ENCODE measurements at regions of chr2 and their contacts with region 1.

Region 1: DNA sequence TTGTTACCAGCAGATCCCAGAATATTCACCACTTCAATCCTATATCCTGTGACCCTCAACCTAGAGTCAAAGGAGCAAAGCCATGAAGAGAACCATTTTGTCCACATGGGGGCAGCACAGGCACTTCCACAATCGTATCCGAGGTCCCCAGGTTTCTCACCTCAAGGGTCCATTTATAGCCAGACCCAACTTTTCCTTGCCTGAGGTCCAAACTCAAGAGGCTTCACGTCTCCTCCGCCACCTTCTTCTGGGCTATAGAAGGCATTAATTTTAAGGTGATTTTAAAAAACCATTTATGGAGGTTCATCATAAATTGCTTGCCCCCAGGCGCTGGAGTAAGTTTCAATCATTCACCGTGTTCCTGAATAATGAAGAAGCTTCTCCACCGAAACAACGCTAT is 111.6 kb upstream of the NABP1 start:
- DNase-seq: peak; percentile 59 to 86 (median 65)
- ATAC-seq: peak; percentile 91
- H3K4me3 ChIP-seq: no peak overlapping the region
- H3K27ac ChIP-seq: peak overlapping the region; percentile 71; the same call in 2 of the 3 replicates
- H3K4me1 ChIP-seq: peaks cover 0 to 36% of the 10 kb centered on the region in 2 experiments; a peak in 3 of 5 replicates
- H3K27me3 ChIP-seq: no peaks in the 10 kb centered on the region
- CTCF ChIP-seq: peak; percentile 73 to 77 (median 75)
- EP300 ChIP-seq: no peak
- POLR2A ChIP-seq: no peak
- RAD21 ChIP-seq: peak; percentile 71 to 75

Region 2: GRCh38 chr2:191555092-191555742 is 11.1 kb before region 1 on chr2:
- CTCF ChIA-PET with region 1: no interaction called
- POLR2A ChIA-PET with region 1: no interaction called
- in situ Hi-C with region 1: no loop called
- intact Hi-C with region 1: no loop called
- DNase-seq: peak; percentile 63 to 87 (median 73)
- ATAC-seq: peak; percentile 90
- H3K4me3 ChIP-seq: no peak overlapping the region
- H3K27ac ChIP-seq: no peak overlapping the region
- H3K4me1 ChIP-seq: peaks cover 4 to 15% of the 10 kb centered on the region in 2 experiments; a peak in 3 of 5 replicates
- H3K27me3 ChIP-seq: no peaks in the 10 kb centered on the region
- CTCF ChIP-seq: peak; percentile 66 to 76 (median 72)
- EP300 ChIP-seq: no peak
- POLR2A ChIP-seq: no peak
- RAD21 ChIP-seq: peak; percentile 83 to 84

Region 3: DNA sequence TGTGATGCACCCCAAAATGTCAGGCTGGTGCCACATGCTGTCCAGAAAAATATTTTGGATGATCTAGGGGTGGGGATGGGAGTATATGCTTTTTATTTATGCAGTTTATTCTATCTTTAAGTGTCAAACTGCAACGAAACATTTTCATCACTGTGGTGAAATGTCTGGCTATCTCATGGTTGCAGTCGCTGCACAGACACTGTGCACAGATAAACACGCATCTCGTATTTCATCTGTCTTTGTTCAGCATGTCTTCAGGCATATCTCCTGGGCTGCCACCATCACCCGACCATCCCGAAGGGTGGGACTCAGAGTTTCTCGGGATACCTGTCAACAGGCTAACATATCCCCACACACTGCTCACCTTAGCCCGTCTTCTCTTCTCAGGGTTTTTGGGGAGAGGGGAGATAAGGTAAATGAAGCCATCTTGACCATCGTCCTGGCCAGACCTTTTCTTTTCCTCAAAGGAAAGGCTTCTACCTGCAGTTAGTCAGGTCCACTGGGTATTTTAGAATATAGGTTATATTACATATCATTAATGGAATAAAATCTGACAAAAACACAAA is 30.9 kb after region 1 on chr2:
- CTCF ChIA-PET with region 1: no interaction called
- POLR2A ChIA-PET with region 1: no interaction called
- in situ Hi-C with region 1: no loop called
- intact Hi-C with region 1: loop called (anchors 2 kb)
- DNase-seq: peak; percentile 36 to 85 (median 54)
- ATAC-seq: peak; percentile 91
- H3K4me3 ChIP-seq: no peak overlapping the region
- H3K27ac ChIP-seq: peak overlapping the region; percentile 48; the same call in 2 of the 3 replicates
- H3K4me1 ChIP-seq: peaks cover 0 to 14% of the 10 kb centered on the region in 2 experiments; a peak in 3 of 5 replicates
- H3K27me3 ChIP-seq: no peaks in the 10 kb centered on the region
- CTCF ChIP-seq: no peak
- EP300 ChIP-seq: peak; percentile 98
- POLR2A ChIP-seq: no peak
- RAD21 ChIP-seq: no peak; a peak in 1 of 4 replicates

Region 4: GRCh38 chr2:191637182-191638078 is 71.1 kb after region 1 on chr2:
- CTCF ChIA-PET with region 1: no interaction called
- POLR2A ChIA-PET with region 1: no interaction called
- in situ Hi-C with region 1: loop called (anchors 5 kb)
- intact Hi-C with region 1: loop called (anchors 1 kb)
- DNase-seq: peak; percentile 25 to 72 (median 40)
- ATAC-seq: peak; percentile 81
- H3K4me3 ChIP-seq: peak overlapping the region; percentile 22
- H3K27ac ChIP-seq: peak overlapping the region; percentile 85
- H3K4me1 ChIP-seq: peaks cover 0 to 30% of the 10 kb centered on the region in 2 experiments; a peak in 4 of 5 replicates
- H3K27me3 ChIP-seq: no peaks in the 10 kb centered on the region
- CTCF ChIP-seq: no peak
- EP300 ChIP-seq: peak; percentile 88
- POLR2A ChIP-seq: no peak
- RAD21 ChIP-seq: peak in 1 of 2 experiments; percentile 21; a peak in 1 of 4 replicates

Region 5: DNA sequence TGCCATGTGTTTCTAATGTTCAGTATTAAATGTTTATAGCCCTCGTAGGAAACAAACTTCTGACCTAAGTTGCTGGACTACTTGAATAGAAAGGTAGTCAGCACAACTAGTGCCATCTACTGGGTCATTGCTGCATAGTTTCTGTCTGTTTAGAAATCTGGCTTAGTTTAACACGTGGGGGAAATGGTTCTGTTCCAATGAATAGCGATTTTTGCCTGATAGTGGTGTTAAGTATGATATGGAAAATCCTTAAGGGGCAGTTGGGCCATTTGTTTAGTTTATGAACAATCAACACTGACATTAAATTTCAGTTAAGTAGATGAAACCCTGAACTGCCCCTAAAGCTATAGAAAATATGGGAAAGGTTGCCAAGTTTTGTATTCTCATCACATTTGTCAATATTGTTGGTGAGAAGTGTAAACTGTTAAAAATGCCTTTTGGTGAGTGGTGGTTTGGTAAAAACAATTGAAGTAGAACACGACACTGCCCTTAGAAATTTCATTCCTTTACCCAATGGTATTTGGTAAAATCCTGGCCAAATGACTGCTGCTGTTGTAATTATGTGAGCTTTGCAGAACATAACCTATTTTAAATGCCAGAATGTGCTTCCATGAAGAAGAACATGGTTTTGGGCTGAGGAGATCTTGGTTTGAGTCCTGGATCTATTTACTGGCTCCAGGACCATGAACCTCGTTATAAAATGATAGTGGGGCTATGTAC is 124.8 kb after region 1 on chr2:
- CTCF ChIA-PET with region 1: interaction called, 11 read pairs
- POLR2A ChIA-PET with region 1: interaction called, 5 read pairs
- in situ Hi-C with region 1: no loop called
- intact Hi-C with region 1: loop called (anchors 1 kb)
- DNase-seq: peak; percentile 47 to 75 (median 54)
- ATAC-seq: peak; percentile 73
- H3K4me3 ChIP-seq: no peak overlapping the region
- H3K27ac ChIP-seq: peak overlapping the region; percentile 55; the same call in 2 of the 3 replicates
- H3K4me1 ChIP-seq: peaks cover 0 to 7% of the 10 kb centered on the region in 2 experiments; a peak in 3 of 5 replicates
- H3K27me3 ChIP-seq: no peaks in the 10 kb centered on the region
- CTCF ChIP-seq: peak; percentile 58 to 78 (median 66); a peak in 5 of 6 replicates
- EP300 ChIP-seq: 0 out of 2 replicates have a peak, but pooled peaks have one; percentile 17
- POLR2A ChIP-seq: peak; percentile 52
- RAD21 ChIP-seq: peak; percentile 85 to 87

Region 6: DNA sequence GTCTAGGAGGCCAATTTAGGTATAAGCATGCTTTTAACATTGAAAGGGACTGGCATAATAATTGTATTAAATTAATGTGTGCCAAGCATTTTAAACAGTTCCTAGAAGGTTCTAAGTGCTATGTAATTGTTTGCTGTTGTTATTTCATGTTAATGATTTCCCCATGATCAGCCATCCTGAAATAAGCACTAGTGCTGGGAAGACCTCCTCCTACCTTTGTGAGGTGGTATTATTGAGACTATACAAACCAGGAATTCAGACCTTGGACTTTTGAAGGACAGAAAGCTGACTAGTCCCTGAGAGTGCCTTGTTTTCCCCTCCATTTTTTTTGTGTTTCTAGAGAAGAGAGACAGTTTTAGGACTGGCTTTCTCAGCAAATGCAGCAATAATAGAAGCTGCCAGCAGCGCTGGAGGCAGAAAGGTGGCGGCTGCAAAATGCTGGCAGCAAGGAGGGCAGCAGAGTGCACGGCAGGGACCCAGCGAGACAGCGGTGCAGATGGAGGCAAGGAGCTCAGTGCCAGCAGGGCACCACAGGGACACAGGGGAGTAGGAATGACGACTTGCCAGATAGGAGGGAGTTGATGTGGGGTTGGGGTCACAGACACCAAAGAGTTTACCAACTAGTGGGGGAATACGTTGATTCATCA is 136.9 kb after region 1 on chr2:
- CTCF ChIA-PET with region 1: no interaction called
- POLR2A ChIA-PET with region 1: no interaction called
- in situ Hi-C with region 1: no loop called
- intact Hi-C with region 1: no loop called
- DNase-seq: no peak
- ATAC-seq: no peak
- H3K4me3 ChIP-seq: no peak overlapping the region
- H3K27ac ChIP-seq: no peak overlapping the region
- H3K4me1 ChIP-seq: no peaks in the 10 kb centered on the region
- H3K27me3 ChIP-seq: no peaks in the 10 kb centered on the region
- CTCF ChIP-seq: no peak
- EP300 ChIP-seq: no peak
- POLR2A ChIP-seq: no peak
- RAD21 ChIP-seq: no peak

Region 7: DNA sequence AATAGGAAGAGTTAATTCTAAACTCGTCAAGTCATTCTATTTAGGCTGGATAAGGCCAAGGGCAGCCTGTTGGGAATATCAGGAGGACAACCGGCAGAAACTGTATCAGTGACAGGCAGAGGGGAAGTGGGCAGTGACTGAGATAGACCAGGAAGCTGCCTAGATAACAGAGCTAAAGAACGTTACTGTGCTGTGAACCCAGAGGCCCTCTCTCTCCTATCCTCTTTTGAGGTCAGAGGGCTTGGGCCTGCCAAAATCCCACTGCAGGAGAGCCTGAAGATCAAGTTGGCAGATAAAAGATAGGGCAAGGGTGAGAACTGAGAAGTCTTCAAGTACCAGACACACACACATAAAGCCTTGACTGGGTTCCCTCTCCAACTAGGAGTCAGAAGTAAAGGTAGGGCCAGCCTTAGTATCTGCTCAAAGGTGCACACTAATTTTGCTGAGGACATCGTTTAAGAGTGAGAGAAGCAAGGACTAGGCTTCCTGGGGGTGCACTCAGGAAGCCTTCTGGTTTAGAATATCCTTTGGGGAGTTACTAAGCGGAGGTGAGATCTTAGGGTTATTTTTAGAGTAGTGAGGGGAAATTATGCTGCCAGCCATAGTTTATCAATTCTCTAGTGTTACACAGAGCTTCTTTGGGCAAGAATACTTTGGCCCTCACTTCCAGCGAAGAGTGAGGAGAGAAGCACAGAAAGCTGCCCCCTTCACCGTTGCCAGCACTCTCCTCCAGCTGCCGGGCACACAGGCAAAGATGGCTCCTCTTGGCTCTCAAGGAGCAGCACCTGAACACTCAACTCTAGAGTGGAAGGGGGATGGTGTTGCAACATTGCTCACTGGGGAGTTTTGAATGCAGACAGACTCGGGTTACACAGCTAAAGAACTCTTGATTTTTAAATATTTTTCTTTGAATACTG is 270.8 kb after region 1 on chr2:
- CTCF ChIA-PET with region 1: no interaction called
- POLR2A ChIA-PET with region 1: interaction called, 3 read pairs
- in situ Hi-C with region 1: loop called (anchors 10 kb)
- intact Hi-C with region 1: loop called (anchors 10 kb)
- DNase-seq: peak; percentile 59 to 89 (median 67)
- ATAC-seq: peak; percentile 73
- H3K4me3 ChIP-seq: peak overlapping the region; percentile 50
- H3K27ac ChIP-seq: peak overlapping the region; percentile 95
- H3K4me1 ChIP-seq: peaks cover 8 to 49% of the 10 kb centered on the region in 2 experiments
- H3K27me3 ChIP-seq: no peaks in the 10 kb centered on the region
- CTCF ChIP-seq: no peak
- EP300 ChIP-seq: peak; percentile 98
- POLR2A ChIP-seq: 0 out of 2 replicates have a peak, but pooled peaks have one; percentile 38
- RAD21 ChIP-seq: no peak

Measured in K562 (cell line).